ENCODE measurements at regions of chr5 and their contacts with region 1.

Region 1: GRCh38 chr5:21802869-21803490 is 1050.2 kb downstream of the CDH12 start:
- DNase-seq: no peak
- ATAC-seq: no peak

Region 2: GRCh38 chr5:21723500-21723899 is 79.5 kb before region 1 on chr5:
- intact Hi-C with region 1: no loop called
- DNase-seq: no peak
- ATAC-seq: no peak

Region 3: DNA sequence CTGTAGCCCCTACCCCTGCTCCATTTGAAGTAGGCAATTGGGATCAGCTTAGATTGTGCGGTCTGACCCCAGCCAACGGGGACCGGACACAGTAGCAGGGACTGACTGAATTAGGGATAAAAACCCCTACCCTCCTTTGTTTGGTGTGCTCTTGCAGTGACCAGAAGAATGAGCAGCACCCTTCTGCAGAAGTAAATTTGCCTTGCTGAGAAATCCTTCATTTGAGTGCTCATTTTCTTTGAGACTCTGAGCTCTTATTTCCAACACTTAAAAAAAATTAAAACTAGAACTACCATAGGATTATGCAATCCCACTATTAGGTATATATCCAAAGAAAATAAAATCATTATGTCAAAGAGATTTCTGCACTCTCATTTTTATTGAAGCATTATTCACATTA is 490.2 kb after region 1 on chr5:
- intact Hi-C with region 1: no loop called
- DNase-seq: no peak
- ATAC-seq: no peak

Region 4: GRCh38 chr5:22460187-22460586 is 657.2 kb after region 1 on chr5:
- intact Hi-C with region 1: loop called (anchors 10 kb)
- DNase-seq: no peak
- ATAC-seq: no peak